ENCODE measurements at regions of chr11 and their contacts with region 1.

Region 1: DNA sequence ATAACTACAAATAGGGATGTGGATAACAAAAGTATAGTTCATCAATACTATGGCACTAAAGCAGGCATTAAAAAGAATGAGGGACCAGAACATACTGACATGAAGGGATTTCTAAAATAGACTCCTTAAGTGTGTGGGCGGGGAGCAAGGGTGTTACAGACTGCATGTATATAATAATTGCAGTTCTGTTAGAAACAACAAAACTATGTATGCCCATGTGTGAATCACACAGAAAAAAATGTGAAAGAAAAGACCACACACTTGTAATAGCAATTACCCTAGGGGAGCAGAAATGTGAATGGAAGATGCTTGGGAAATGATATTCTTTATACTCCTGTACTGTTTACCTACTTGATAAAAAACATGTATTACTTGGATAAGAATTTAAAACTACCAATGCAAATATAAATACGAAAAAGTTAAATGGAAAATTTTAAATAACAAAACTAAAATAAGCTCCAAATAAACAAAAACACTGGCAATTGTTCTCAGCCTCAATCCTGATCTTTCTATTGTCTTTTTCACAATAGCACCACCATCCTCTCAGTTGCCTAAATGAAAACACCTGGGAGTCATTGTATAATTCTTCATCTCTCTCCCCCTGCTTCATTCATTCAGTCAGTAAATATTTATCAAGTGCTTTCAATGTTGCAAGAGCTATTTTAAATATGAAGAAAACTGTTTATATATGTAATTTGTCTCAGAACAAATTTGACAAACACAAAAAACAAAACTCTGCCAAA is 129.8 kb downstream of the FCHSD2 start:
- DNase-seq: no peak
- ATAC-seq: no peak
- H3K4me3 ChIP-seq: no peak overlapping the region
- H3K4me3 Mint-ChIP-seq: no peak overlapping the region
- H3K27ac ChIP-seq: no peak overlapping the region
- H3K27ac Mint-ChIP-seq: no peak overlapping the region
- H3K4me1 ChIP-seq: no peaks in the 10 kb centered on the region
- H3K4me1 Mint-ChIP-seq: peaks cover 0 to 17% (median 4%) of the 10 kb centered on the region in 7 donors
- H3K27me3 ChIP-seq: no peaks in the 10 kb centered on the region
- H3K27me3 Mint-ChIP-seq: no peaks in the 10 kb centered on the region

Region 2: DNA sequence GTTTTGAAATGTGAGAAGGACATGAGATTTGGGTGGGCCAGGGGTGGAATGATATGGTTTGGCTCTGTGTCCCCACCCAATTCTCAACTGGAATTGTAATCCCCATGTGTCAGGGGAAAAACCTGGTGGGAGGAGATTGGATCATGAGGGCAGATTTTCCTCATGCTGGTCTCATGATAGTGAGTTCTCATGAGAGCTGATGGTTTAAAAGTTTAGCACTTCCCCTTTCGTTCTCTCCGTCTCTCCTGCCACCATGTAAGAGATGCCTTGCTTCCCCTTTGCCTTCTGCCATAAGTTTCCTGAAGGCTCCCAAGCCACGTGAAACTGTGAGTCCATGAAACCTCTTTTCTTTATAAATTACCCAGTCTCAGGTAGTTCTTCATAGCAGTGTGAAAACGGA is 16.3 kb after region 1 on chr11:
- CTCF ChIA-PET with region 1: no interaction called
- POLR2A ChIA-PET with region 1: interaction called, 4 read pairs
- intact Hi-C with region 1: loop called in 1 of 2 experiments (anchors 2 kb)
- DNase-seq: no peak
- ATAC-seq: peak; percentile 41
- H3K4me3 ChIP-seq: no peak overlapping the region
- H3K4me3 Mint-ChIP-seq: peak overlapping the region in 2 of 10 donors; percentile 45
- H3K27ac ChIP-seq: no peak overlapping the region
- H3K27ac Mint-ChIP-seq: no peak overlapping the region
- H3K4me1 ChIP-seq: peaks cover 0 to 6% of the 10 kb centered on the region in 2 donors
- H3K4me1 Mint-ChIP-seq: peaks cover 12 to 50% (median 40%) of the 10 kb centered on the region in 7 donors
- H3K27me3 ChIP-seq: no peaks in the 10 kb centered on the region
- H3K27me3 Mint-ChIP-seq: no peaks in the 10 kb centered on the region

Measured in naive thymus-derived CD4-positive, alpha-beta T cell (primary cell).